Activated B cell treated with CpG ODN at 0.5 μM for 24 hours (primary cell): ENCODE measurements at regions of chr7 and their contacts with region 1.

Region 1: DNA sequence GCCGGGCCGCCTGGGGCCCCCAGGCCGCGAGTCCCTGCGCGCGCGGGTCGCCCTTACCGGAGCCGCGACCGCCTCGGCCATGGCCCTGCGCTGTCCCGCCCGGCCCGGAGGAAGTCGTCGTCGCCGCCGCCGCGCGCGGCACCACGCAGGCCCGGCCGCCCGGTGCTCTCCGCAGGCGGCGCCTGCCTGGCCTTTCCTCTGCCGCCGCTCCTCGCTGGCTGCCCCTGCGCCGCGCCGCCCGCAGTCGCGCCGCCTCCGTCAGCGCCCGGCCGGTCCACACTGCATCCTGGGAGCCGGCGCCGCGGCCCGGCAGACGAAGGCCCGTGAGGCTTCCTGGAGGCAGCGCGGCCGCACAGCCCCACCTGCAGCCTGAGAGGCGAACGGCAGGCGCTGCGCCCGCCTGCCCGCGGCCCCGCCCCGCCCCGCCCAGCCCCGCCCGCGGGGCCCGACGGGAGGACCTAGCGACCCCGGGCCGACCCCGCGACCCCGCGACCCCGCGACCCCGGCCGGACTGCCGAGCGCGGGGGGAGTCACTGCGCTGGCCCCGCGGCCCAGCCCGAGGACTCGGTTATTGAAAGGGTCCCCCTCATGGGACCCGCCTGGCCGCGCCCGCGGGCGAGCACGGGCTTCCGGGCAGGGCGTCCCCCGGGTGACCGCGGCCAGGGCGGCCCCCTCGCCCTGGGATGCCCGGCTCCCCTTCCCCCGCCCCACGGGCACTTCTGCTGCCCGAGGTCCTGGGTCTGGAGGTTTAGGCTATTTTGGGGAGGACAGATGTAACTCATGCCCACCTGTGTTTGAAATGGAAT is at the start of gene ZNF746:
- DNase-seq: peak; percentile 79
- ATAC-seq: peak; percentile 96
- H3K4me3 Mint-ChIP-seq: peak within 1 kb of the TSS; percentile 92
- H3K27ac Mint-ChIP-seq: peak within 1 kb of the TSS; percentile 82
- H3K4me1 Mint-ChIP-seq: peaks cover 24% of the 10 kb centered on the region
- H3K27me3 Mint-ChIP-seq: peaks cover 2% of the 10 kb centered on the region
- CTCF ChIP-seq: no peak
- total RNA-seq, gene ZNF746: 21.0 and 28.4 TPM in 2 replicates

Region 2: GRCh38 chr7:149005241-149006050 is 492.2 kb before region 1 on chr7:
- CTCF ChIA-PET with region 1: no interaction called
- POLR2A ChIA-PET with region 1: no interaction called
- intact Hi-C with region 1: loop called (anchors 1 kb)
- DNase-seq: peak; percentile 74
- ATAC-seq: peak; percentile 91
- H3K4me3 Mint-ChIP-seq: no peak overlapping the region
- H3K27ac Mint-ChIP-seq: no peak overlapping the region
- H3K4me1 Mint-ChIP-seq: peaks cover 3% of the 10 kb centered on the region
- H3K27me3 Mint-ChIP-seq: no peaks in the 10 kb centered on the region
- CTCF ChIP-seq: peak; percentile 56

Region 3: DNA sequence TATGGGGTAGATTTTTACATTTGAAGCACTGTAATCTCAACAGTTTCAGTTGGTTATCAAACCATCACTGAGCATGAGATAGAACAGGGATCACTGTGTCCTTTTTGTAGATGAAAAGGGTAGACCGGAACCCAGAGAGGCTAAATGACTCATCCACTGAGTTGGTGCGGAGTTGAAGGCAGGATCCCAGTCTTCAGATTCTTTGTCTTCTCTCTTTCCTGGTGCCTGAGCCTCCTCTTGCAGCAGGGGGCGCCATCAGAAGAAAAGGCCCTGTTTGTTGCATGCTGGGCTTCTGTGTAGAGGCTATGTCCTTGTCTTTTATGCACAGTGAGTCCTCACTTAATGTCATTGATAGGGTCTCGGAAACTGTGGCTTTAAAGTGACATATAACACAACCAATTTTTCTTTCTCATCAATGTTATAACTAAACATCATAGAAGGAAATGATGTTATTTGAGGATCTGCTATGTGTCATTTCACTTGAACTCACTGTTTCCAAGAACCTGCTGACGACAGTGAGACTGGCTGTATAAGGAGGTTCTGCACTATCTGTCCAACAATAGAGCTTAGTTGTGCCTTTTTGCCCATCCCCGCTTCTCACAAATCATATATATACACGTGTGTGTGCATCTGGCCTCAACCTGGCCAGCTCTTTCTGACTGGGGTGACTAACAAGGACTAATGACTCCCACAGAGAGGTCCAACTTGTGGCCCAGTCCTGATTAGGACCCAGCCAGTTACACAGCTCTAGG is 288.0 kb before region 1 on chr7:
- CTCF ChIA-PET with region 1: no interaction called
- POLR2A ChIA-PET with region 1: no interaction called
- intact Hi-C with region 1: loop called (anchors 2 kb)
- DNase-seq: no peak
- ATAC-seq: peak; percentile 42
- H3K4me3 Mint-ChIP-seq: no peak overlapping the region
- H3K27ac Mint-ChIP-seq: no peak overlapping the region
- H3K4me1 Mint-ChIP-seq: no peaks in the 10 kb centered on the region
- H3K27me3 Mint-ChIP-seq: no peaks in the 10 kb centered on the region
- CTCF ChIP-seq: no peak

Region 4: GRCh38 chr7:149261829-149262617 is 235.6 kb before region 1 on chr7 and contains the start of gene ZNF783:
- CTCF ChIA-PET with region 1: no interaction called
- POLR2A ChIA-PET with region 1: interaction called, 3 read pairs
- intact Hi-C with region 1: loop called (anchors 1 kb)
- DNase-seq: peak; percentile 88
- ATAC-seq: peak; percentile 91
- H3K4me3 Mint-ChIP-seq: peak within 1 kb of the TSS; percentile 89
- H3K27ac Mint-ChIP-seq: peak within 1 kb of the TSS; percentile 90
- H3K4me1 Mint-ChIP-seq: peaks cover 23% of the 10 kb centered on the region
- H3K27me3 Mint-ChIP-seq: no peaks in the 10 kb centered on the region
- CTCF ChIP-seq: no peak
- total RNA-seq, gene ZNF783: 28.5 and 34.1 TPM in 2 replicates

Region 5: GRCh38 chr7:149460493-149461277 is 37.0 kb before region 1 on chr7 and contains the start of gene ZNF777:
- CTCF ChIA-PET with region 1: no interaction called
- POLR2A ChIA-PET with region 1: no interaction called
- intact Hi-C with region 1: loop called (anchors 1 kb)
- DNase-seq: peak; percentile 69
- ATAC-seq: peak; percentile 97
- H3K4me3 Mint-ChIP-seq: peak within 1 kb of the TSS; percentile 87
- H3K27ac Mint-ChIP-seq: peak within 1 kb of the TSS; percentile 65
- H3K4me1 Mint-ChIP-seq: peaks cover 24% of the 10 kb centered on the region
- H3K27me3 Mint-ChIP-seq: peaks cover 9% of the 10 kb centered on the region
- CTCF ChIP-seq: no peak
- total RNA-seq, gene ZNF777: 14.0 and 16.2 TPM in 2 replicates

Region 6: DNA sequence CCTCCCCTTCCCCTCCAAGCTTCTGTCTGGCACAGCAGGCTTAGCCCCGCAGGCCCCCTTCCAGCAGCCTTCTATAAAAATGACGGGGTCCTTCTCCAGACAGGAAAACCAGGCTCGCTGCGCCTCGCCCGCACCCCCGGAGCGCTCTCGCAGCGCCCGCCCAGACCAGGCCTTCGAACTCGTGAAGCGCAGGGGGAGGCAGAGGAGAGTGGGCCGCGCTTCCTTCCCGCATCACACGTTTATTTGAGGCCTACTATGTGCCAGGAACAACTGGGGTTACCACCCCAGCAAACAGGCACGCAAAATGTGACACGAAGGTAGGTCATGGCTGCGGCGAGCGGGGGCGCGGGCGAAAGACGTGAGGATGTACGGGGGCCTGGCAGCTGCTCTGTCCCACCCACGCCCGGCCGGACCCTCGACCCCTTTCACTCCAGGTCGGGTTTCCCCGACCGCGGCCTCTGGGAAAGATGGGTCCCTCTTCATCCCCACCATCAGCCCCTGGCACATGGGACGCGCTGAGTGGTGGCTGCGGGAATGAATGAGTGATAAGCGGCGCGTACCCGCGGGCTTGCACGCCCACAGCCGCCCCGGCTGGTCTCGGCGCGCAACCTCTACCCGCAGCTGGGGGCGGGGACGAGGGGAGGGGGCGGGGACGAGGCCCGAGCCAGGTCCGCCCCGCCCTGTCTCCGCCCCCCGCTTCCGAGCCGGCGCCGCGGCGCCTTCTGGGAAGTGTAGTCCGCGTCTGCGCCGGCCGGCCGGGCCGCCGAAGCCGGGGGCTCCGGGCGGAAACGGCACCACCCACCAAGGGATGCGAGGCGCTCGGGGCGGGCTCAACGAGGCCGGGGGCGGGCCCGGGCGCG is 216.6 kb after region 1 on chr7:
- CTCF ChIA-PET with region 1: no interaction called
- POLR2A ChIA-PET with region 1: no interaction called
- intact Hi-C with region 1: loop called (anchors 1 kb)
- DNase-seq: peak; percentile 88
- ATAC-seq: peak; percentile 91
- H3K4me3 Mint-ChIP-seq: peak overlapping the region; percentile 83
- H3K27ac Mint-ChIP-seq: no peak overlapping the region
- H3K4me1 Mint-ChIP-seq: peaks cover 17% of the 10 kb centered on the region
- H3K27me3 Mint-ChIP-seq: no peaks in the 10 kb centered on the region
- CTCF ChIP-seq: no peak